ENCODE measurements at regions of chr18 and their contacts with region 1.

Region 1: GRCh38 chr18:54671291-54671881 is 80.3 kb downstream of the DYNAP start:
- DNase-seq: peak; percentile 11
- H3K4me3 ChIP-seq: no peak overlapping the region
- H3K27ac ChIP-seq: no peak overlapping the region
- H3K4me1 ChIP-seq: no peaks in the 10 kb centered on the region
- H3K27me3 ChIP-seq: no peaks in the 10 kb centered on the region
- CTCF ChIP-seq: peak; percentile 35 to 49

Region 2: DNA sequence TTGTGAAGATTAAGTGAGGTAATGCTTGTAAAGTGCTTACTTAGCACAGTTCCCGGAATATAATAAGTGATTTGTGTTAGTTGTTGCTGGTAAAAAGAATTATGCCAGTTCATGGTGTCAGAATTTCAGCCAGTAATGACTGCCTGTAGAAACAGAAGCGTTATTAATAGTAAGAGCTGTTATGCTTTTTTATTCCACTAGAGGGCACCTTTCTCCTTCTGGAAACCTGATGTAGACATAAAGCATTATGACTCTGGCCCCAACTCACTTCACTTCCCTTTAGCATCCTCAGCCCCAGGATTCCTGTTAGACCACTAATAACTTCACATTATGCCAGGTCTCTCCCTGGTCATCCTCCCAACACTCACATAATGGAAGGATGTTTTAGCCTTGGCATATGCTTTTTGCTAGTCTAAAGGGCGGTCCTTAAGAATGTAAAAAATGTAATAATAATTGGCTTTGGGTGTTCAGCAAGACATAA is 278.8 kb before region 1 on chr18:
- CTCF ChIA-PET with region 1: no interaction called
- dilution Hi-C with region 1: no loop called
- in situ Hi-C with region 1: no loop called
- intact Hi-C with region 1: loop called (anchors 1 kb)
- DNase-seq: peak; percentile 44
- H3K4me3 ChIP-seq: no peak overlapping the region
- H3K27ac ChIP-seq: no peak overlapping the region
- H3K4me1 ChIP-seq: peaks cover 16% of the 10 kb centered on the region
- H3K27me3 ChIP-seq: peaks cover 2% of the 10 kb centered on the region
- CTCF ChIP-seq: peak; percentile 68 to 72

Region 3: DNA sequence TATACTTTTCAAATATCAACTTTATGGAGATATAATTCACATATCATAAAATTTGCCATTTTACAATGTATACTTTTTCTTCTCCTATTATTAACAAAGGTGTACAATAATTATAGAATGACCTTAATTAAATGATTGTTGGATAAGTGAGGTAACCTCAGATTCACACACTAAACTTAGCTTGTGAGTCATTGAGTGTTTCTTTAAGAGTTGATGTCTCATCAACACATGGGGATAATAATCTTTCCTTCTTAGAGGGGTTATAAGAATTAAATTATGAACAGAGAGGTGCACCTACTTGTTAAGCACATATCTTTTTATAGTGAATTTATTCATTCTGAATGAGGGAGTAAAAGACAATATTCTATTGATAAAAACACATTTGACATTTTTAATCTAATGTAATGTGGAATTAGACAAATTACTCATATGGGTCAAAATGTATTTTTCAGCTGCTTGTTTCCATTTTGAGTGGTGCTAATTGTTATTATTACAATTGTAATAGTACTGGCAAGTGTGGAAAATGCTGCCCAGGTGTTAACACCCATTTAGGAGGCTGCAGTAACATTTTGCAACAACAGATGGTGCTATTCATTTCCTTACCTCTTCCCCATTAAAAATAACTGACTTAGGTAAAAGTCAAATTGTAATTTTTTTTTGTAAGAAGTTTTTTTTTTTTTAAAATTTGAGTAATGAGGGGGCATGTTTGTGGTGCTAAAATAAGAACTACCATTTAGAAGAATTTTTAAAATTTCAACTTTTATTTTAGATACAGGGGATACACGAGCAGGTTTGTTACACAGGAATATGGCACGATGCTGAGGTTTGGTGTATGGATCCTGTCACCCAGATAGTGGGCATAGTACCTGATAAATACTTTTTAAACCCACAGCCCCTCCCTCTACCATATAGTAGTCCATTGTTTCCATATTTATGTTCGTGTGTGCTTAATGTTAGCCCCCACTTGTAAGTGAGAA is 112.5 kb before region 1 on chr18:
- CTCF ChIA-PET with region 1: no interaction called
- dilution Hi-C with region 1: no loop called
- in situ Hi-C with region 1: loop called in 1 of 2 experiments (anchors 25 kb)
- intact Hi-C with region 1: loop called (anchors 1 kb)
- DNase-seq: peak; percentile 4
- H3K4me3 ChIP-seq: no peak overlapping the region
- H3K27ac ChIP-seq: no peak overlapping the region
- H3K4me1 ChIP-seq: no peaks in the 10 kb centered on the region
- H3K27me3 ChIP-seq: no peaks in the 10 kb centered on the region
- CTCF ChIP-seq: peak; percentile 73 to 76

Region 4: DNA sequence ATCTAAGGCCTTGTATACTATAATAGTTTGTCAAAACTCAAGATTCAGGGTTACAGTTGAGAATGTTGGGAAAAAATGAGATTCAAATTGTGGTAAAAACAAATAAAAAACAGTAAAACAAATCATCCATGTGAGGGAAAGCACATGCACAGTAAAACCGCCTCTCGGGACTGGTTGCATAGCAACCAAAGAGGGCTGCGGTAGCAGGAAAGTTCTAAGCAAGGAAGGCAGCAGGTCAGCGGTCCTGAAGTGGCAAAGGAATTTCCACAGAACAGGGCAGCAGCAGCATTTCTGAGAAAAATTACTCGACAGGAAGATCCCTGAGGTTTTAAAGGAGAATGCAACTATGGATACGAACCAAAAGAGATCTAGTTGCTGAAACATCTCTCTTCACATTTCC is 13.4 kb after region 1 on chr18:
- CTCF ChIA-PET with region 1: no interaction called
- dilution Hi-C with region 1: no loop called
- in situ Hi-C with region 1: no loop called
- intact Hi-C with region 1: loop called (anchors 1 kb)
- DNase-seq: no peak
- H3K4me3 ChIP-seq: no peak overlapping the region
- H3K27ac ChIP-seq: no peak overlapping the region
- H3K4me1 ChIP-seq: no peaks in the 10 kb centered on the region
- H3K27me3 ChIP-seq: no peaks in the 10 kb centered on the region
- CTCF ChIP-seq: no peak

Region 5: DNA sequence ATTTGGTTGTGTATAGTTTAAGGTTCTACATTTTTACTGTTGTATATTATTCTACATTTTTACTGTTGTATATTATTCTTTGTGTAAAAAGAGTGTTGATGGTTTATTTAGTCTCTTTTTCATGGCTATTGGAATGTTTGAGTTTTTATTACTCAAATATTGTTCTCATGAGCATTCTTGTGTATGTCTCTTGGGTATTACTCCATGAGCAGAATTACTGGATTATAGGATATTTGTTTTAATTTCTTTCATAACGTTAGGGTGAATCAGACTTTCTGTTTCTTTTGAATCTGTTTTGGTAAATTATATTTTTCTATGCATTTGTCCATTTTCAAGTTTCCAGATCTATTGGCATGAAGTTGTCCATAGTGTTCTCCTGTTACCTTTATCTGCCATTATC is 31.3 kb after region 1 on chr18:
- CTCF ChIA-PET with region 1: no interaction called
- dilution Hi-C with region 1: no loop called
- in situ Hi-C with region 1: no loop called
- intact Hi-C with region 1: no loop called
- DNase-seq: no peak
- H3K4me3 ChIP-seq: no peak overlapping the region
- H3K27ac ChIP-seq: no peak overlapping the region
- H3K4me1 ChIP-seq: no peaks in the 10 kb centered on the region
- H3K27me3 ChIP-seq: no peaks in the 10 kb centered on the region
- CTCF ChIP-seq: no peak

Measured in mammary epithelial cell (primary cell).